Psoas muscle (tissue), 8 donors: ENCODE measurements at regions of chr4 and their contacts with region 1.

Region 1: DNA sequence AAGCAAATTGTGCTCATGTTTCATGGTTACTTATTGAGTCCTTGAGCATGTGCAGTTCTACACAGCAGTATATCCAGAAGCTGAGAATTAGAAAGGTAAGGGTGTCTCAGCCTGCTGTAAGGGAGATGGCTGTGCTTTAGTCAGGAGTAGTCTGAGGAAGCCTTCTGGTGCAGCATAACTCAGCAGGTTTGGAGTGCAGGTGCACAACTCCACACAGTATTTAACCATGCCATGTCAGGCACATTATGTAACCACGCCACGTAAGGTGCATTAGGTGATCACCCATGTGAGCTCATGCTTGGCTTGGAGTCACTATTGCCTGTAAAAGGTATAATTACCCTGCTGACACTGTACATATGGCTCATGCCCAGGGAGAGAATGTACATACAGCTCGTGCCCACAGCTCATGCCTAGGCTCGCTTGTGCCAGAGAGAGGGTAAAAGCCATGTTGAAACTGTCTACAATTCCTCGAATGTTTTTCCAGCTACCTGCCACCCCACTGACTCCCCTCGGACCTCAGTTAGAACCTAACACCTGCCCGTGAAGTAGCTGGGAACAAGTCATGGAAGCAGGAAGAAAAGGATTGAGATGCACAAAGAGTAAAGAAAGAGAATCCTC is 37.8 kb downstream of the UCHL1 start:
- DNase-seq: no peak
- ATAC-seq: no peak
- H3K4me3 ChIP-seq: no peak overlapping the region
- H3K27ac ChIP-seq: no peak overlapping the region
- H3K4me1 ChIP-seq: no peaks in the 10 kb centered on the region
- H3K27me3 ChIP-seq: no peaks in the 10 kb centered on the region
- CTCF ChIP-seq: no peak

Region 2: DNA sequence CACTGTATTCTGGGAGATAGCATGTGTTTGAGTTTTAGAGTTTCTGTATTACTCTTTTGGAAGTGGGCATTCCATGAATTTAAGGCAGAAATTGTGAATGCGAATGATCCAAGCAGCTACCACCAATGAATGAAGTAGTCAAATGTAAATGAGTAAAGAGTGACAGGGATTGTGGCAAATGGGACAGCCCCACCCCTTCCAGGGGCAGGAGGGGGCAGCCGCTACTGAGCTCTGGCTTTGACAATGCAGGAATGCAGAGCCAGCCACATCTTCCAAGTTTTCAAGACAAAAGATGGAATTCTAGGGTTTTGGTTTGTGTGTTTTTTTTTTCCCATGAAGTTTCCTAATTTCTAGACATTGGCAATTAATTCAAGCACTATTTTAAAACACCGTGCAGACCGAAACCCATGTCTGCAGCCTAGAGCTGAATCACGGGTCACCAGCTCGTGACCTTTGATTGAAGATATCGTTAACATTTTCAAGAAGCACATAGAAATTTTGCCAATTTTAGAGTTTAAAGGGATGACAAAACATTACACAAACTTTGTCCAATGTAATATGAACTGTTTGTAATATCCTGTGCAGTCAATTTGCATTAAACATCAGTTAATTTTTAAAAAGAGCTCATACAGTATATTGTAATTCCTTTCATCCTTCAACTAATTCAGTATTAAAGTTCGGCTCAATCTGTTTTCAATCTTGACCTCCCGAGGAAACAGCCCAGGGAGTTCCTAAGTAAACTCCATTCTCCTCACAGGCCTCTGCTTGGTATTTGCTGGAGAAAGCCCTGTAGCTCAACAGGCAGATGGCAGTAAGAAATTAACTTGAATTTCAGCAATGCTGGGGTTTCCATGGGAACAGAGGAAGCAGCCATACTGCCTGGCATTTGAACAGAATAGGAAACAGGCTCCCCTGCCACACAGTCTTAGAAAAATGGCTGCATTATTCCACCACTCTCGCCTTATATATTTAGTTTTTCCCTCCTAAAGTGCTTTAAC is 45.6 kb after region 1 on chr4:
- intact Hi-C with region 1: loop called in 1 of 2 experiments (anchors 10 kb)
- DNase-seq: no peak
- ATAC-seq: peak in 2 of 4 donors; percentile 45 to 55
- H3K4me3 ChIP-seq: no peak overlapping the region
- H3K27ac ChIP-seq: no peak overlapping the region
- H3K4me1 ChIP-seq: no peaks in the 10 kb centered on the region
- H3K27me3 ChIP-seq: no peaks in the 10 kb centered on the region
- CTCF ChIP-seq: no peak

Region 3: GRCh38 chr4:42074294-42074693 is 779.7 kb after region 1 on chr4:
- intact Hi-C with region 1: no loop called
- DNase-seq: no peak
- ATAC-seq: no peak
- H3K4me3 ChIP-seq: no peak overlapping the region
- H3K27ac ChIP-seq: no peak overlapping the region
- H3K4me1 ChIP-seq: no peaks in the 10 kb centered on the region
- H3K27me3 ChIP-seq: no peaks in the 10 kb centered on the region
- CTCF ChIP-seq: no peak